ENCODE measurements at regions of chr2 and their contacts with region 1.

Region 1: GRCh38 chr2:197145471-197146138 is 165.0 kb downstream of the ANKRD44 start:
- DNase-seq: peak in 5 of 9 experiments; percentile 28 to 76 (median 54)
- ATAC-seq: peak; percentile 90
- H3K4me3 ChIP-seq: no peak overlapping the region
- H3K4me3 Mint-ChIP-seq: peak overlapping the region; percentile 31
- H3K27ac ChIP-seq: peak overlapping the region in 1 of 2 experiments; percentile 47
- H3K27ac Mint-ChIP-seq: peak overlapping the region; percentile 88
- H3K4me1 ChIP-seq: peaks cover 77% of the 10 kb centered on the region
- H3K4me1 Mint-ChIP-seq: peaks cover 81% of the 10 kb centered on the region
- H3K27me3 ChIP-seq: no peaks in the 10 kb centered on the region
- H3K27me3 Mint-ChIP-seq: no peaks in the 10 kb centered on the region
- CTCF ChIP-seq: no peak

Region 2: GRCh38 chr2:197037863-197038398 is 107.7 kb before region 1 on chr2:
- CTCF ChIA-PET with region 1: no interaction called
- POLR2A ChIA-PET with region 1: no interaction called
- intact Hi-C with region 1: no loop called
- DNase-seq: no peak
- ATAC-seq: no peak
- H3K4me3 ChIP-seq: no peak overlapping the region
- H3K4me3 Mint-ChIP-seq: no peak overlapping the region
- H3K27ac ChIP-seq: no peak overlapping the region
- H3K27ac Mint-ChIP-seq: peak overlapping the region; percentile 73
- H3K4me1 ChIP-seq: peaks cover 2% of the 10 kb centered on the region
- H3K4me1 Mint-ChIP-seq: peaks cover 46% of the 10 kb centered on the region
- H3K27me3 ChIP-seq: no peaks in the 10 kb centered on the region
- H3K27me3 Mint-ChIP-seq: no peaks in the 10 kb centered on the region
- CTCF ChIP-seq: no peak

Region 3: GRCh38 chr2:197130318-197130717 is 15.3 kb before region 1 on chr2:
- CTCF ChIA-PET with region 1: interaction called, 7 read pairs
- POLR2A ChIA-PET with region 1: interaction called, 5 read pairs
- intact Hi-C with region 1: loop called in 1 of 2 experiments (anchors 1 kb)
- DNase-seq: peak in 3 of 9 experiments; percentile 21 to 65 (median 52)
- ATAC-seq: peak; percentile 87
- H3K4me3 ChIP-seq: peak overlapping the region in 1 of 2 experiments; percentile 13
- H3K4me3 Mint-ChIP-seq: peak overlapping the region; percentile 40
- H3K27ac ChIP-seq: peak overlapping the region in 1 of 2 experiments; percentile 28
- H3K27ac Mint-ChIP-seq: peak overlapping the region; percentile 92
- H3K4me1 ChIP-seq: peaks cover 57% of the 10 kb centered on the region
- H3K4me1 Mint-ChIP-seq: peaks cover 71% of the 10 kb centered on the region
- H3K27me3 ChIP-seq: no peaks in the 10 kb centered on the region
- H3K27me3 Mint-ChIP-seq: no peaks in the 10 kb centered on the region
- CTCF ChIP-seq: no peak

Region 4: GRCh38 chr2:197159661-197160211 is 14.1 kb after region 1 on chr2:
- CTCF ChIA-PET with region 1: interaction called, 4 read pairs
- POLR2A ChIA-PET with region 1: no interaction called
- intact Hi-C with region 1: loop called in 1 of 2 experiments (anchors 2 kb)
- DNase-seq: peak in 6 of 9 experiments; percentile 13 to 67 (median 34)
- ATAC-seq: peak; percentile 86
- H3K4me3 ChIP-seq: no peak overlapping the region
- H3K4me3 Mint-ChIP-seq: peak overlapping the region; percentile 47
- H3K27ac ChIP-seq: peak overlapping the region in 1 of 2 experiments; percentile 20
- H3K27ac Mint-ChIP-seq: peak overlapping the region; percentile 89
- H3K4me1 ChIP-seq: peaks cover 54% of the 10 kb centered on the region
- H3K4me1 Mint-ChIP-seq: peaks cover 80% of the 10 kb centered on the region
- H3K27me3 ChIP-seq: no peaks in the 10 kb centered on the region
- H3K27me3 Mint-ChIP-seq: no peaks in the 10 kb centered on the region
- CTCF ChIP-seq: no peak

Region 5: DNA sequence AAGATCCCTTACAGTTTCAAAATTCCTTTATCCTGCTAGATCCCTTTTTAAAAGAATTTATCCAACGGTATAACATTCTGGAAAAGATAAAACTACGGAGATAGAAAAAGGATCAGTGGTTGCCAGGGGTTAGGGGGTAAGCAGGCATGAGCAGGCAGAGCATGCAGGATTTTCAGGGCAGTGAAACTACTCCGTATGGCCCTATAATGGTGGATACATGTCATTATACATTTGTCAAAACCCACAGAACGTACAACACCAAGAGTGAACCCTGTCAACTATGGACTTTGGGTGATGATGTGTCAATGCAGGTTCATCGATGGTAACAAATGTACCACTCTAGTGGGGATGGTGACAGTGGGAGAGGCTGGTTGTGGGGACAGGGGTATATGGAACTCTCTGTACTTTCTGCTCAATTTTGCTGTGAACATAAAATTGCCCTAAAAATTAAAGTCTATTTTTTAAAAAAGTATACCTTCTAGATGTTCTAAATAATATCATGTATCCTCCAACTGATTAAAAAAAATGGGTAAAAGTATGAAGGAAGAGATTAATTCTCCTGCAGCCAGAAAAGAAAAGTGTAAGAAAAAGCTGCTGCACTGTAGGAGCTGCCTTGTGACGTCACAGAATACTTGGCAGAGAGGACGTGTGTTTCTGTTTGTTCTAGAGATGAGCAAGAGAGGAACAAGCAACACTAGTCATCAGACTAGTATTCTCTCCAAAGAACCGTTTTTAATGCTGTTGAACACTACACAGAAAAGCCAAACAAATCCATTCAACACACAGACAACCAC is 141.4 kb after region 1 on chr2:
- CTCF ChIA-PET with region 1: no interaction called
- POLR2A ChIA-PET with region 1: no interaction called
- intact Hi-C with region 1: no loop called
- DNase-seq: peak in 5 of 9 experiments; percentile 43 to 90 (median 67)
- ATAC-seq: peak; percentile 93
- H3K4me3 ChIP-seq: no peak overlapping the region
- H3K4me3 Mint-ChIP-seq: peak overlapping the region; percentile 71
- H3K27ac ChIP-seq: peak overlapping the region; percentile 26 to 66
- H3K27ac Mint-ChIP-seq: peak overlapping the region; percentile 96
- H3K4me1 ChIP-seq: peaks cover 93% of the 10 kb centered on the region
- H3K4me1 Mint-ChIP-seq: peaks cover 76% of the 10 kb centered on the region
- H3K27me3 ChIP-seq: no peaks in the 10 kb centered on the region
- H3K27me3 Mint-ChIP-seq: no peaks in the 10 kb centered on the region
- CTCF ChIP-seq: no peak